ENCODE measurements at regions of chr12 and their contacts with region 1.

Region 1: GRCh38 chr12:69653703-69654102 is 43.0 kb upstream of the LRRC10 start:
- DNase-seq: no peak
- ATAC-seq: no peak
- H3K4me3 Mint-ChIP-seq: no peak overlapping the region
- H3K27ac Mint-ChIP-seq: no peak overlapping the region
- H3K4me1 Mint-ChIP-seq: no peaks in the 10 kb centered on the region
- H3K27me3 Mint-ChIP-seq: no peaks in the 10 kb centered on the region; the same call in 1 of the 2 replicates
- CTCF ChIP-seq: no peak

Region 2: DNA sequence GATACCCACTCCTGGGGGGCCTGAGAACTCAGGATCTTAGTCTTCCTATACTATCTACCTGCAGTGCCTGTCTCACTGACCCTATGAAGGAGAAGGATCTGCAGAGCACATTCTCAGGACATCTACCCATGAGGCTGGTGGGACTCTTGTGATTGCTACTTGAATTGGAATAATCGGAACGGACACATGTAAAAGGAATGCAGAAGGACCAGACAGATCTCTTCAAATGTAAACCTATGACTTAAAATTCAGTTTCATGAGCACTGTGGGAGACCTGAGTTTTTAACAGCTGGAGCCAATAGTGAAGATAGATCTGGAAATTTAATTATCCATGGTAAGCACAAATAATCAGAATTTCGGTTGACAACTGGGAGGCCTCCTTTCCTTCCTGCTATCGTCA is 449.5 kb before region 1 on chr12:
- CTCF ChIA-PET with region 1: no interaction called
- POLR2A ChIA-PET with region 1: no interaction called
- DNase-seq: no peak
- ATAC-seq: no peak
- H3K4me3 Mint-ChIP-seq: no peak overlapping the region
- H3K27ac Mint-ChIP-seq: no peak overlapping the region
- H3K4me1 Mint-ChIP-seq: no peaks in the 10 kb centered on the region
- H3K27me3 Mint-ChIP-seq: peaks cover 4% of the 10 kb centered on the region; the same call in 1 of the 2 replicates
- CTCF ChIP-seq: no peak

Region 3: DNA sequence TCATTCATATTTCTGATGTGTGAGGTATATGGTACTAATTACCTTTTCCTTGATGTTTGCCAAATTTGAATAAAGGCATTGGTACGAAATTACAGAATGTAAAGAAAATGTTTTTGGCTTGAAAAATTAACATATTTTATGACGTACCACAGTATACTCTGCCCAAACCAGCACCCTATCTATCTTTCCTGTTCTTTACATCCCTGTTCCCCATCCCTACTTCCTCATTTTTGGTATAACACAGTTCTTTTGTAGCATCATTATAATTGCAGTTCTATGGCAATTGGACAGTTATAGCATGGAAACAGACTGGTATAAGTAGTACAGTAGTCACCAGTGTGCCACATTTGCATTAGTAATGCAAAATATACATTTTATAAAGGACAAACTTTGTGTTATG is 75.4 kb before region 1 on chr12:
- CTCF ChIA-PET with region 1: no interaction called
- POLR2A ChIA-PET with region 1: no interaction called
- DNase-seq: no peak
- ATAC-seq: no peak
- H3K4me3 Mint-ChIP-seq: no peak overlapping the region
- H3K27ac Mint-ChIP-seq: no peak overlapping the region
- H3K4me1 Mint-ChIP-seq: peaks cover 9% of the 10 kb centered on the region
- H3K27me3 Mint-ChIP-seq: no peaks in the 10 kb centered on the region; the same call in 1 of the 2 replicates
- CTCF ChIP-seq: no peak

Region 4: GRCh38 chr12:69639400-69640016 is 14.2 kb before region 1 on chr12:
- CTCF ChIA-PET with region 1: interaction called, 15 read pairs
- POLR2A ChIA-PET with region 1: no interaction called
- DNase-seq: peak; percentile 74
- ATAC-seq: peak; percentile 91
- H3K4me3 Mint-ChIP-seq: no peak overlapping the region
- H3K27ac Mint-ChIP-seq: no peak overlapping the region
- H3K4me1 Mint-ChIP-seq: peaks cover 7% of the 10 kb centered on the region
- H3K27me3 Mint-ChIP-seq: 0 out of 2 replicates have a peak, but pooled peaks cover 3% of the 10 kb centered on the region
- CTCF ChIP-seq: peak; percentile 77